SK-N-SH (cell line): ENCODE measurements at regions of chr3 and their contacts with region 1.

Region 1: GRCh38 chr3:113148286-113148685 is 63.1 kb upstream of the BOC start:
- DNase-seq: peak; percentile 59
- H3K4me3 ChIP-seq: no peak overlapping the region
- H3K27ac ChIP-seq: peak overlapping the region in 1 of 2 experiments; percentile 99; a peak in 2 of 4 replicates
- H3K4me1 ChIP-seq: peaks cover 0 to 41% of the 10 kb centered on the region in 2 experiments; a peak in 3 of 4 replicates
- H3K27me3 ChIP-seq: no peaks in the 10 kb centered on the region
- CTCF ChIP-seq: no peak
- EP300 ChIP-seq: peak in 1 of 2 experiments; percentile 53; a peak in 2 of 4 replicates
- RAD21 ChIP-seq: peak; percentile 25; the same call in 1 of the 2 replicates

Region 2: GRCh38 chr3:113136071-113136470 is 12.2 kb before region 1 on chr3:
- CTCF ChIA-PET with region 1: interaction called, 13 read pairs
- POLR2A ChIA-PET with region 1: no interaction called
- DNase-seq: no peak
- H3K4me3 ChIP-seq: no peak overlapping the region
- H3K27ac ChIP-seq: no peak overlapping the region
- H3K4me1 ChIP-seq: no peaks in the 10 kb centered on the region; a peak in 1 of 4 replicates
- H3K27me3 ChIP-seq: no peaks in the 10 kb centered on the region
- CTCF ChIP-seq: peak; percentile 47
- EP300 ChIP-seq: no peak
- RAD21 ChIP-seq: peak; percentile 68

Region 3: GRCh38 chr3:113166719-113167492 is 18.6 kb after region 1 on chr3:
- CTCF ChIA-PET with region 1: interaction called, 8 read pairs
- POLR2A ChIA-PET with region 1: interaction called, 18 read pairs
- DNase-seq: peak; percentile 57
- H3K4me3 ChIP-seq: peak overlapping the region in 1 of 2 experiments; percentile 25; a peak in 2 of 4 replicates
- H3K27ac ChIP-seq: peak overlapping the region; percentile 80 to 95
- H3K4me1 ChIP-seq: peaks cover 12 to 61% of the 10 kb centered on the region in 2 experiments; a peak in 3 of 4 replicates
- H3K27me3 ChIP-seq: no peaks in the 10 kb centered on the region
- CTCF ChIP-seq: no peak
- EP300 ChIP-seq: peak; percentile 23 to 94; a peak in 3 of 4 replicates
- RAD21 ChIP-seq: peak; percentile 34